ENCODE measurements at regions of chr12 and their contacts with region 1.

Region 1: DNA sequence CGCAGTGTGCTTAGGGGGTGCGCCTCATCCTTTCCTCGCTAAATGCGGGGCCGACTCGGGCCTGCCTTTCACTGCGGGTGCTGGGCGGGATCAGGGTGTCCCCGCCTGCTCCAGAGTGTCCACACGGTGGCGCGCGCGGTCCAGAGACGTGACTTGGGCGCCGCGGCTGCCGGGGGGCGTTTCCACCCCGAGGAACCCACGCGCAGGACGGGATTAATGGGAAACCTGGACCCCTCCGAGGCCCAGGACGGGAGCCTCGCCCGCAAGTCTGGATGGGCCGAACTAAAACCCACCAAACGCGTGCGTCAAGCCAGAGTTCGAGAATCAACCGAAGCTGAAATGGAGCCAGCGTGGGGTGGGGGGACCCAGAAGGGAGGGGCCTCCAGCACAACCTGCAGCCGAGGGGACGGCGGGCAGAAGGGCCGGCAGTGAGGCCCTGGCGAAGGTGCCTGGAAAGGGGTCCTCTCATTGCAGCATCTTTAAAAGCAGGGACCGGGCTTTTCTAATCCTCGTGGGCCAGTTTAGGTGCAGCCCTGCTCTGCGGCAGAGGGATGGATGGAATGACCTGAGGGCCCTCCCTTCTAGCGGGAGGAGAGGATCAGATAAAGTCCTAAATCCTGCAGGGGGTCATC is 93.3 kb downstream of the NINJ2 start:
- DNase-seq: peak; percentile 92
- H3K4me3 ChIP-seq: peak overlapping the region; percentile 51 to 73 (median 64)
- H3K27ac ChIP-seq: peak overlapping the region; percentile 93 to 95 (median 94)
- H3K4me1 ChIP-seq: peaks cover 6 to 46% (median 32%) of the 10 kb centered on the region in 4 donors
- H3K27me3 ChIP-seq: no peaks in the 10 kb centered on the region
- CTCF ChIP-seq: peak; percentile 90 to 96 (median 94)
- EP300 ChIP-seq: no peak
- POLR2A ChIP-seq: no peak

Region 2: GRCh38 chr12:269191-269590 is 300.7 kb before region 1 on chr12:
- in situ Hi-C with region 1: no loop called
- intact Hi-C with region 1: no loop called
- DNase-seq: no peak
- H3K4me3 ChIP-seq: no peak overlapping the region
- H3K27ac ChIP-seq: no peak overlapping the region
- H3K4me1 ChIP-seq: no peaks in the 10 kb centered on the region
- H3K27me3 ChIP-seq: peaks cover 33% of the 10 kb centered on the region
- CTCF ChIP-seq: no peak
- EP300 ChIP-seq: no peak
- POLR2A ChIP-seq: no peak

Region 3: GRCh38 chr12:321607-322326 is 248.2 kb before region 1 on chr12:
- in situ Hi-C with region 1: no loop called
- intact Hi-C with region 1: no loop called
- DNase-seq: no peak
- H3K4me3 ChIP-seq: no peak overlapping the region
- H3K27ac ChIP-seq: no peak overlapping the region
- H3K4me1 ChIP-seq: no peaks in the 10 kb centered on the region
- H3K27me3 ChIP-seq: no peaks in the 10 kb centered on the region
- CTCF ChIP-seq: no peak
- EP300 ChIP-seq: no peak
- POLR2A ChIP-seq: no peak

Region 4: DNA sequence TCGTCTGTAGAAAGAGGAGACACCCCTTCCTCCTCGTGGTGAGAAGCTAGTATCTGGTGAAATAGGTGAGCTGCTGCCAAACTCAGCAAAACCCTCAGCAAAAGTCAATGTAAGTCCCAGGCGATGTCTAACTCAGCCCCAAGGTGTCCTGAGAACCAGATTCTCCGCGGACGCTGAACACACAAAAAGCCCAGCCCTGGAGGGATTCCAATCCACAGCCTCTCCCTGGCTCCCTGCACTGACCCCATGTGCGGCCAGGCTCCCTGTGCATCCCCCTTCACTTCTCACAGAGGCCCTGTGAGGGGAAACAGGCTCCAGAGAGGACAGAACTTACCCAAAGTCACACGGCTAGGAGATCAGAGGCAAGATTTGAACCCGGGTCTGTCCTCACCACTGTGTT is 11.8 kb after region 1 on chr12:
- in situ Hi-C with region 1: no loop called
- intact Hi-C with region 1: loop called (anchors 1 kb)
- DNase-seq: no peak
- H3K4me3 ChIP-seq: no peak overlapping the region
- H3K27ac ChIP-seq: no peak overlapping the region
- H3K4me1 ChIP-seq: peaks cover 0 to 2% (median 0%) of the 10 kb centered on the region in 4 donors
- H3K27me3 ChIP-seq: no peaks in the 10 kb centered on the region
- CTCF ChIP-seq: no peak
- EP300 ChIP-seq: no peak
- POLR2A ChIP-seq: no peak

Region 5: DNA sequence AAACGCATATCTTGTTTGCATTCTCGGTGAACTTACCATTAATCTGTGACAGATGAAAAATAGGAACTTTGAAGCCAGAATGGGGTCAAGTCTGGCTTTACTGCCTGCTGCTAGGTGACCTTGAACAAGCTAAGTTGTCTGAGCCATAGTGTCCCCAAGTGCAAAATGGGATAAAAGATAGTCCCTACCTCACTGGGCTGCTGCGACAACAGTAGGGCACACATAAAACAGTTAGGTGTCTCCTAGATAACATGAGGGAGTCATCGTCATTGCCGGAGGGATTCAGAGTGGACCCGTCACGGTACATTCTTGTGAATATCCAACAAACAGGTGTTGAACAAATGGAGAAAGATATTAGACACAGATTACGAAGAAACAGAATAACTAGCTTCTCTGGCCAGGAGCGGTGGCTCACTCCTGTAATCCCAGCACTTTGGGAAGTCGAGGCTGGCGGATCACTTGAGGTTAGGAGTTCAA is 22.1 kb after region 1 on chr12:
- in situ Hi-C with region 1: no loop called
- intact Hi-C with region 1: no loop called
- DNase-seq: no peak
- H3K4me3 ChIP-seq: no peak overlapping the region
- H3K27ac ChIP-seq: no peak overlapping the region
- H3K4me1 ChIP-seq: no peaks in the 10 kb centered on the region
- H3K27me3 ChIP-seq: no peaks in the 10 kb centered on the region
- CTCF ChIP-seq: no peak
- EP300 ChIP-seq: no peak
- POLR2A ChIP-seq: no peak

Region 6: DNA sequence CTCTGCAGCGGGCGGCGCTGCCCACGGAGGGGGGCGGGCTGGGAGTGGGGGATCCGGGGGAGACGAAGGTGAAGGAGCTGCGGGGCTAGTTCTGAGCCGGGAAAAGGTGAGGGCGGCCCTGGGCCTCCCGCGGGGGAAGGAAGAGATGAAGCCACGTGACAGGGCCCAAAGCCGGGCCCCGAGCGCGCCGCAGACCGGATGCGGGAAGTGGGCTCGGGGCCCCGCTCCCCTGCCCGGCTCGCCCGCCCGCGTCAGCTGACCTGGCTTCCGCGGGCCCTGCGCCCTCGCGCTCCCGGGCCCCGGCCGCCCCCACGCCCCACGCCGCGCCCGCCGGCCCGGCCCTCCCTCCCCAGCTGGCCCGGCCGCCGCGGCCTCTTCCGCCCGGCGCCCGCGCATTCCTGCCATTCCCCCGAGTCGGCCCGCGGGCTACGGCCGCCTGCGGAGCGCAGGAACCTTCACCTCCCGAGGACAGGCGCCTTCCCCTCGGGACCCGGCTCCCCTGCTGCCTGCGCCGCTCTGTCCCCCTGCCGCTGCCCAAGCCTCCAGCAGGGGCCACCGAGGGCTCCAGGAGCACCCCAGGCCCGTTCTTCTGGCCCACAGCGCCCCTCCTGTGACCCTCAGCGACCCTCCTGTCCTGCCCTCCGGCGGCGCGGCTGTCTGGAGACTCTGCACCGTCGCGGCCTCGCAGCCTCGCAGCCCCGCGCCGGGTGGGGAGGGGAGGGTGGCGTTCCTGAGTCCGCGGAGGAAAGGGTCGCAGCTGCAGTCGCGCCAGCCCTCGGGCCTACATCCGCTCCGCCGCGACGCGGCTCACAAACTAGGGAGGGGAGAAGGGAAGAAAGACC is 72.9 kb after region 1 on chr12:
- in situ Hi-C with region 1: no loop called
- intact Hi-C with region 1: loop called (anchors 2 kb)
- DNase-seq: peak; percentile 84
- H3K4me3 ChIP-seq: peak overlapping the region; percentile 48 to 81 (median 74)
- H3K27ac ChIP-seq: peak overlapping the region; percentile 93 to 98 (median 95)
- H3K4me1 ChIP-seq: peaks cover 6 to 42% (median 29%) of the 10 kb centered on the region in 4 donors
- H3K27me3 ChIP-seq: no peaks in the 10 kb centered on the region
- CTCF ChIP-seq: peak; percentile 22 to 69 (median 36)
- EP300 ChIP-seq: no peak
- POLR2A ChIP-seq: peak; percentile 64

Region 7: GRCh38 chr12:685388-685787 is 115.5 kb after region 1 on chr12:
- in situ Hi-C with region 1: no loop called
- intact Hi-C with region 1: no loop called
- DNase-seq: peak; percentile 47
- H3K4me3 ChIP-seq: no peak overlapping the region
- H3K27ac ChIP-seq: no peak overlapping the region
- H3K4me1 ChIP-seq: no peaks in the 10 kb centered on the region
- H3K27me3 ChIP-seq: no peaks in the 10 kb centered on the region
- CTCF ChIP-seq: no peak
- EP300 ChIP-seq: no peak
- POLR2A ChIP-seq: no peak

Region 8: GRCh38 chr12:751192-751998 is 181.5 kb after region 1 on chr12:
- in situ Hi-C with region 1: loop called in 2 of 4 experiments (anchors 5 to 25 kb)
- intact Hi-C with region 1: loop called (anchors 5 kb)
- DNase-seq: peak; percentile 93
- H3K4me3 ChIP-seq: peak overlapping the region; percentile 3 to 100 (median 98)
- H3K27ac ChIP-seq: peak overlapping the region; percentile 97 to 100 (median 100)
- H3K4me1 ChIP-seq: peaks cover 6 to 42% (median 24%) of the 10 kb centered on the region in 4 donors
- H3K27me3 ChIP-seq: no peaks in the 10 kb centered on the region
- CTCF ChIP-seq: peak; percentile 55 to 82 (median 63)
- EP300 ChIP-seq: no peak
- POLR2A ChIP-seq: peak; percentile 34

Region 9: DNA sequence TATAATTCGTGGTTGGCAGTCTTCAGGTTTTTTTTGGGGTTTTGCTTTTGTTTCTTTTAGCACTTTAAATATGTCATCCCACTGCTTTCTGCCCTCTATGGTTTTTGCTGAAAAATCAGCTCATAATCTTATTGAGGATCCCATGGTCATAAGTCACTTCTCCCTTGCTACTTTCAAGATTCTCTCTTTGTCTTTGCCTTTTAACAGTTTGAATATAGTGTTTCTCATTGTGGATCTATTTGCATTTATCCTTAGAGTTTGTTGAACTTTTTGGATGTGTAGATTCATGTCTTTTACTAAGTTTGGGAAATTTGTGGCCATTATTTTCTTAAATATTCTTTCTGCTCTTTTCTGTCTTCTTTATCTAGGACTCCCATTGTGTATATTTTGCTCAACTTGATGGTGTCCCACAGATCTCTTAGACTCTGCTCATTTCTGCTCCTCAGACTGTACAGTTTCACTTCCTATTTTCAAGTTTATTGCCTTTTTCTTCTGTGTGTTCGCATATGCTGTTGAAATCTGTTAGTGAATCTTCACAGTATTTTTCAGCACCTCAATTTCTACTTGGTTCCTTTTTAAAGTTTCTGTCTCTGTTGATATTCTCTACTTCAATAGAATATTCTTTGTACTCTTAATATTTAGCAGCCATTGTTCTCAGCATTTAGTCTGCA is 253.2 kb after region 1 on chr12:
- in situ Hi-C with region 1: loop called in 2 of 4 experiments (anchors 10 to 25 kb)
- intact Hi-C with region 1: no loop called
- DNase-seq: no peak
- H3K4me3 ChIP-seq: no peak overlapping the region
- H3K27ac ChIP-seq: no peak overlapping the region
- H3K4me1 ChIP-seq: peaks cover 0 to 7% (median 0%) of the 10 kb centered on the region in 4 donors
- H3K27me3 ChIP-seq: no peaks in the 10 kb centered on the region
- CTCF ChIP-seq: no peak
- EP300 ChIP-seq: no peak
- POLR2A ChIP-seq: no peak

Region 10: GRCh38 chr12:949453-950191 is 379.7 kb after region 1 on chr12 and contains the start of gene RAD52:
- in situ Hi-C with region 1: loop called in 3 of 4 experiments (anchors 10 to 25 kb)
- intact Hi-C with region 1: loop called (anchors 2 kb)
- DNase-seq: peak; percentile 98
- H3K4me3 ChIP-seq: peak within 1 kb of the TSS; percentile 35 to 74 (median 62)
- H3K27ac ChIP-seq: peak within 1 kb of the TSS; percentile 89 to 97 (median 94)
- H3K4me1 ChIP-seq: peaks cover 6 to 26% (median 10%) of the 10 kb centered on the region in 4 donors
- H3K27me3 ChIP-seq: no peaks in the 10 kb centered on the region
- CTCF ChIP-seq: peak; percentile 95 to 99 (median 98)
- EP300 ChIP-seq: no peak
- POLR2A ChIP-seq: peak; percentile 89
- total RNA-seq, gene RAD52: 12.7 to 84.2 (median 31.4) TPM